Left lung (tissue), 14 donors: ENCODE measurements at regions of chr14 and their contacts with region 1.

Region 1: GRCh38 chr14:70622111-70622712 is 19.5 kb upstream of the TTC9 start:
- DNase-seq: peak in 1 of 4 donors; percentile 32
- ATAC-seq: peak; percentile 93
- H3K4me3 ChIP-seq: no peak overlapping the region
- H3K27ac ChIP-seq: no peak overlapping the region
- H3K4me1 ChIP-seq: no peaks in the 10 kb centered on the region
- H3K27me3 ChIP-seq: peaks cover 0 to 1% of the 10 kb centered on the region in 2 donors
- CTCF ChIP-seq: peak; percentile 63 to 65

Region 2: GRCh38 chr14:70514168-70515069 is 107.8 kb before region 1 on chr14:
- intact Hi-C with region 1: no loop called
- DNase-seq: no peak
- ATAC-seq: no peak
- H3K4me3 ChIP-seq: no peak overlapping the region
- H3K27ac ChIP-seq: no peak overlapping the region
- H3K4me1 ChIP-seq: no peaks in the 10 kb centered on the region
- H3K27me3 ChIP-seq: no peaks in the 10 kb centered on the region
- CTCF ChIP-seq: no peak

Region 3: DNA sequence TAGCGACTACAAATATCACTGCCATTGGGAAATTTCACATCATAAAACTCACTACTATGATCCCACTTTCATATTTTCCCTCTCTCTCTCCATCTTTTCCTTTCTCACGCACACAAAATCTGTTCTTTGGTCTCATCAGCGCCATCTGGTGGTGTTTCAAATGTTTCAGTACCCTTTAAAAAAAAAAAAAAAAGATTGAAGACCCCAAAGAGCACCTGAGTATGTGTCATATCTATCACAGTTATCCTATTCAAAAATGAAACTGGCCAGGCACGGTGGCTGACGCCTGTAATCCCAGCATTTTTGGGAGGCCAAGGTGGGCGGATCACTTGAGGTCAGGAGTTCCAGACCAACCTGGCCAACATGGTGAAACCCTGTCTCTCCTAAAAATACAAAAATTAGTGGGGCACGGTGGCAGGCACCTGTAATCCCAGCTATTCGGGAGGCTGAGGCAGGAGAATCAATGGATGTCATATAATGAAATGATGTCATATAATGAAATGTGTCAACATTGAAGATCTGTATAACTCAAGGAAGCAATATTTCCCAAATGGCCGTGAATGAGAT is 91.9 kb after region 1 on chr14:
- intact Hi-C with region 1: loop called in 1 of 2 experiments (anchors 10 kb)
- DNase-seq: peak in 2 of 4 donors; percentile 32 to 68
- ATAC-seq: peak; percentile 31
- H3K4me3 ChIP-seq: no peak overlapping the region
- H3K27ac ChIP-seq: no peak overlapping the region
- H3K4me1 ChIP-seq: peaks cover 6 to 9% of the 10 kb centered on the region in 2 donors
- H3K27me3 ChIP-seq: peaks cover 0 to 10% of the 10 kb centered on the region in 2 donors
- CTCF ChIP-seq: peak; percentile 43 to 56